Activated naive CD4-positive, alpha-beta T cell treated with anti-CD3 and anti-CD28 coated beads, Interleukin-2, amount 10 ng/mL, durations not matched to agents 7 days and 5 days (primary cell): ENCODE measurements at regions of chr22 and their contacts with region 1.

Region 1: GRCh38 chr22:39170825-39171622 is 18.5 kb upstream of the CBX7 start:
- DNase-seq: peak; percentile 88
- H3K4me3 Mint-ChIP-seq: peak overlapping the region; percentile 18
- H3K27ac Mint-ChIP-seq: peak overlapping the region; percentile 89
- H3K4me1 Mint-ChIP-seq: peaks cover 44% of the 10 kb centered on the region
- H3K27me3 Mint-ChIP-seq: peaks cover 17% of the 10 kb centered on the region

Region 2: GRCh38 chr22:38850941-38851849 is 319.8 kb before region 1 on chr22:
- CTCF ChIA-PET with region 1: no interaction called
- DNase-seq: no peak
- H3K4me3 Mint-ChIP-seq: no peak overlapping the region
- H3K27ac Mint-ChIP-seq: no peak overlapping the region
- H3K4me1 Mint-ChIP-seq: no peaks in the 10 kb centered on the region
- H3K27me3 Mint-ChIP-seq: peaks cover 72% of the 10 kb centered on the region

Region 3: DNA sequence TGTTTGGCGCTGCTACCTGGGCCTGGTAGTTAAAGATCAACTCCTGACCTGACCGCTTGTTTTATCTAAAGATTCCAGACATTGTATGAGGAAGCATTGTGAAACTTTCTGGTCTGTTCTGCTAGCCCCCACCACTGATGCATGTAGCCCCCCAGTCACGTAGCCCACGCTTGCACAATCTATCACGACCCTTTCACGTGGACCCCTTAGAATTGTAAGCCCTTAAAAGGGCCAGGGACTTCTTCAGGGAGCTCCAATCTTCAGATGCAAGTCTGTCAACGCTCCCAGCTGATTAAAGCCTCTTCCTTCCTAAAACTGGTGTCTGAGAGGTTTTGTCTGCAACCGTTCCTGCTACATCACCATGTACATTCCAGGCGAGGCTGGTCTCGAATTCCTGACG is 115.4 kb before region 1 on chr22:
- CTCF ChIA-PET with region 1: no interaction called
- DNase-seq: no peak
- H3K4me3 Mint-ChIP-seq: no peak overlapping the region
- H3K27ac Mint-ChIP-seq: no peak overlapping the region
- H3K4me1 Mint-ChIP-seq: no peaks in the 10 kb centered on the region
- H3K27me3 Mint-ChIP-seq: no peaks in the 10 kb centered on the region

Region 4: GRCh38 chr22:39117585-39118191 is 53.3 kb before region 1 on chr22:
- CTCF ChIA-PET with region 1: no interaction called
- DNase-seq: peak; percentile 87
- H3K4me3 Mint-ChIP-seq: no peak overlapping the region
- H3K27ac Mint-ChIP-seq: peak overlapping the region; percentile 57
- H3K4me1 Mint-ChIP-seq: peaks cover 49% of the 10 kb centered on the region
- H3K27me3 Mint-ChIP-seq: no peaks in the 10 kb centered on the region

Region 5: GRCh38 chr22:39155421-39155820 is 15.6 kb before region 1 on chr22:
- CTCF ChIA-PET with region 1: interaction called, 10 read pairs
- DNase-seq: no peak
- H3K4me3 Mint-ChIP-seq: no peak overlapping the region
- H3K27ac Mint-ChIP-seq: no peak overlapping the region
- H3K4me1 Mint-ChIP-seq: peaks cover 17% of the 10 kb centered on the region
- H3K27me3 Mint-ChIP-seq: peaks cover 61% of the 10 kb centered on the region

Region 6: DNA sequence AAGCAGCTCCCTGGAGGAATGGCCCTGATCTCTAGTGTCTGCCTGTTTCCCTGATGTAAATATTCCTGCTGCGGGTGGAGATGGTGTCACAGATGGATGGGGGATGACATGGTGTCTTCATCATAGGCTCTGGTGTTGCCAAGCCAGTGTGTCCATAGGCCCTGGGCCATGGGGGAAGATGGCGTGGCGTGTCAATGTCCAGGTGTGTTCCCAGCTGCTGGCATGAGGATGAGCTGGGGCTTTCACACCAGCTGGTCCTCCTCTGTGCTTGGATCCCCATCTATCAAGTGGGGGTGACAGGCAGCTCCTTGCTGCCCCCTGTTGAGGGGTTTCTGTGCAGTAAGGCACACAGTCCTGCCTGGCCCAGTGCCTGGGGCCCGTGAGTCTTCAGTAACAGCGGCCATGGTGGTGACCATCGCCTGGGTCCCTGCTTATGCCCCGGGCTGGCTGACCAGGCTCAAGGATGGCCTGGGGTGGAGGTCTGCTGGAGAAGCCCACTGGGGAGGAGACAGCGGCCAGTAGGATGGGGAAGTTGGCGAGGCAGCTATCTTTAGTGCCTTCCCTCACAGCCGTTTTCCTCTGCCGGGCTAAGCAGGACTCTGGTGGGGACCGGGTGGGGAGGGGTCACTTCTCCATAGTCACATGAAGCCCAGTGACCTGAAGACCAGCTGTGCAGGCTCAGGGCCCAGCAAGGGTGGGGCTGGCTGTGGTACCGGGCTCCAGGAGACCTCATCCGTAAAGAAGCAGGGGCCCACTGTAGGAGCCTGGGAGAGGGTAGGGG is 135.7 kb after region 1 on chr22:
- CTCF ChIA-PET with region 1: interaction called, 134 read pairs
- DNase-seq: peak; percentile 71
- H3K4me3 Mint-ChIP-seq: no peak overlapping the region
- H3K27ac Mint-ChIP-seq: no peak overlapping the region
- H3K4me1 Mint-ChIP-seq: peaks cover 3% of the 10 kb centered on the region
- H3K27me3 Mint-ChIP-seq: peaks cover 8% of the 10 kb centered on the region